K562 (cell line): ENCODE measurements at regions of chr7 and their contacts with region 1.

Region 1: GRCh38 chr7:146701166-146701565 is 584.6 kb downstream of the CNTNAP2 start:
- DNase-seq: no peak
- ATAC-seq: no peak
- H3K4me3 ChIP-seq: no peak overlapping the region
- H3K27ac ChIP-seq: no peak overlapping the region
- H3K4me1 ChIP-seq: no peaks in the 10 kb centered on the region
- H3K27me3 ChIP-seq: no peaks in the 10 kb centered on the region
- CTCF ChIP-seq: no peak
- EP300 ChIP-seq: no peak
- POLR2A ChIP-seq: no peak
- RAD21 ChIP-seq: no peak

Region 2: DNA sequence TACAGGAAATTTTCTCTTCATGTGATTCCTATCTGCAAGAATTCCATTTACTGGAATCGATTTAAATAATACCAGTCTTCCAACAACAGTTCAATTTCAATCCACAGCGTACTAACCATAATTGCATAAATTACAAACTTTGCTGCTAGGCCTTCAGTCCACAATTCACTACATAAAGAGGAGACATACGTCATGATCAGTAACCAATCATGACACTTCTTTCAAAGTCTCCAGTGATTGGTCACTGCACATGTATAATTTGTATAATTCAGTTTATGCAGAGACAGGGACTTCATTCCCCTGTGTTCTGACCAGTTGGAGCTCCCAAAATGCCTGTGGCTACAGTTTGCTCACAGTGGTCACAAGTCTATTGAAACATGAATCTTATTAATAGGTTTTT is 11.1 kb before region 1 on chr7:
- CTCF ChIA-PET with region 1: no interaction called
- POLR2A ChIA-PET with region 1: no interaction called
- in situ Hi-C with region 1: no loop called
- intact Hi-C with region 1: loop called (anchors 1 kb)
- DNase-seq: no peak
- ATAC-seq: no peak
- H3K4me3 ChIP-seq: no peak overlapping the region
- H3K27ac ChIP-seq: no peak overlapping the region
- H3K4me1 ChIP-seq: no peaks in the 10 kb centered on the region
- H3K27me3 ChIP-seq: no peaks in the 10 kb centered on the region
- CTCF ChIP-seq: no peak
- EP300 ChIP-seq: no peak
- POLR2A ChIP-seq: no peak
- RAD21 ChIP-seq: no peak